ENCODE measurements at regions of chr10 and their contacts with region 1.

Region 1: DNA sequence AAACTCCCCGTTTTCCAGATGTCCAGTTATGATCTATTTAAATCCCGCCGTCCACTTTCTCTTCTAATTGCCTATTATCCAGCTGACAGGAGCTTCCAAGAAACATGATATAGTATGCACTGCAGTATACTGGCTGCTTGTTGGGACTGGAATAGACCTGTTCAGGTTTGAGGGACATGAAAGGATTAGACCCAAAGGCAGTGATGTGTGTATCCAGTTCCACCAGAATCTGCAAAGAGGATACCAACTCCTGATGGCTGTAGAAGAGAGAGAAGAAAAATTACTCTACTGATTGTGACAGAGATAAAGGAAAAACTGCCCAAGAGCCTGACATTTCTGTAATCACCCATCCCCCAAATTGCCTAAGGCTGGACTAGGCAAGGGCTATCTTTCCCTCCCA is 8.8 kb downstream of the MSS51 start:
- DNase-seq: no peak
- H3K4me3 ChIP-seq: no peak overlapping the region
- H3K27ac ChIP-seq: no peak overlapping the region
- H3K4me1 ChIP-seq: no peaks in the 10 kb centered on the region
- H3K27me3 ChIP-seq: no peaks in the 10 kb centered on the region
- CTCF ChIP-seq: no peak
- POLR2A ChIP-seq: no peak

Region 2: DNA sequence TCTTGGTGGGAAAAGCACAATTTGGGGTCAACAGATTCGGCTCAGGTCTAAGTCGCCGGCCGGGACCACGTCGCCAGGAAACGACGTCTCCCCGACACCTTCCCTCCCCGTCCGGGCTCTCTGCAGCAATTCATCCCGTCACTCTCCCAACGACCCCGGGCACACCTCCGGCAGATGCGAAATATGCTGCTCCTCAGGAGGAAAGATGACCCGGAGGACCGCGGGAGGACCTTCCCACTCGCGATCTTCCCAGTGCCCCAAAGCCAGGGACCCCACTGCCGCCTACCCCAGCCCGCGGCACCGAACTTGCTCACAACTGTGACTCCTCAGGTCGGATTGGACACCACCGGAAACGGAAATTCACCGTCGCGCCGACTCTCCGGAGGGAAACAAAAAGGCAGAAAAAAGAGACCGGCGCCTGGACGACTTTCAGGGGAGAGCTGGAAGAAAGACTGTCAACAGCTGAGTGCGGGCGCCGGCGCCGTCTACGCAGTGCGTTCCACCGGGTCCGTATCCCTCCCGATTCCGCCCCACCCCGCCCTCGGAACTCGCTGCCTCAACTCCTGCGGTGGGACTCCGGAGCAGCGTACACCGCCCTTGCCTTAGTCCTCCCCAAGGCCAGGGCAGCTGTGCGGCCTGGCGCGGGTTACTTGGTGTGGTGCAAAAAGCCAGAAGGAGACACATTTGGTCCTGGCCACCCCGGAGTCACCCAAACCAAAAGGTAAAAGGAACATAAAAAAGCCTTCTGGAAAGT is 305.8 kb after region 1 on chr10:
- intact Hi-C with region 1: loop called (anchors 5 kb)
- DNase-seq: peak; percentile 80 to 90
- H3K4me3 ChIP-seq: peak overlapping the region; percentile 62 to 87 (median 82)
- H3K27ac ChIP-seq: peak overlapping the region; percentile 87 to 92
- H3K4me1 ChIP-seq: peaks cover 0 to 5% of the 10 kb centered on the region in 2 donors
- H3K27me3 ChIP-seq: no peaks in the 10 kb centered on the region
- CTCF ChIP-seq: no peak
- POLR2A ChIP-seq: peak; percentile 38